ENCODE measurements at regions of chr1 and their contacts with region 1.

Region 1: GRCh38 chr1:39091845-39092645 is 65.9 kb downstream of the NDUFS5 start:
- DNase-seq: peak; percentile 75
- H3K4me3 Mint-ChIP-seq: no peak overlapping the region
- H3K27ac Mint-ChIP-seq: no peak overlapping the region
- H3K4me1 Mint-ChIP-seq: peaks cover 3% of the 10 kb centered on the region
- H3K27me3 Mint-ChIP-seq: no peaks in the 10 kb centered on the region

Region 2: DNA sequence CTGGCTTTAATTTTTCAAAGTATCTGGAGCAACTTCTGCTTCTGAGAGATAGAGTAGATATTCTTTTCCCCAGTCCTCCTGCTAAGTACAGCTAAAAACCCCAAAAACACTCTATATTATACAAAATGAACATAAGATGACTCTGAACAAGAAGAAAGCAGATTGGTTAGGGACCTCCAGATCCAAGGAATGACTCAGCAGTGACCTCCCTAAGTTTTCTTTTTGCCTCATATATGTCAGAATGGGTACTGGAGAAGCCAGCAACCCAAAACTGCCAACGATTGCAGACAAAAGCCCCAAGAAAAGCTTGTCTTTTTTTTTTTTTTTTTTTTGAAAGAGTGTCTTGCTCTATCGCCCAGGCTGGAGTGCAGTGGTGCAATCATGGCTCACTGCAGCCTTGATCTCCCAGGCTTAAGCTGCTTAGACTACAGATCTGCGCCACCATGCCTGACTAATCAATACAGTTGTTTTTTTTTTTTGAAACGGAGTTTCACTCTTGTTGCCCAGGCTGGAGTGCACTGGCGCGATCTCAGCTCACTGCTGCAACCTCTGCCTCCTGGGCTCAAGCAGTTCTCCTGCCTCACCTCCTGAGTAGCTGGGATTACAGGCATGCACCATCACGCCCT is 43.2 kb before region 1 on chr1:
- CTCF ChIA-PET with region 1: no interaction called
- POLR2A ChIA-PET with region 1: no interaction called
- DNase-seq: no peak
- H3K4me3 Mint-ChIP-seq: no peak overlapping the region
- H3K27ac Mint-ChIP-seq: no peak overlapping the region
- H3K4me1 Mint-ChIP-seq: peaks cover 12% of the 10 kb centered on the region
- H3K27me3 Mint-ChIP-seq: no peaks in the 10 kb centered on the region

Region 3: DNA sequence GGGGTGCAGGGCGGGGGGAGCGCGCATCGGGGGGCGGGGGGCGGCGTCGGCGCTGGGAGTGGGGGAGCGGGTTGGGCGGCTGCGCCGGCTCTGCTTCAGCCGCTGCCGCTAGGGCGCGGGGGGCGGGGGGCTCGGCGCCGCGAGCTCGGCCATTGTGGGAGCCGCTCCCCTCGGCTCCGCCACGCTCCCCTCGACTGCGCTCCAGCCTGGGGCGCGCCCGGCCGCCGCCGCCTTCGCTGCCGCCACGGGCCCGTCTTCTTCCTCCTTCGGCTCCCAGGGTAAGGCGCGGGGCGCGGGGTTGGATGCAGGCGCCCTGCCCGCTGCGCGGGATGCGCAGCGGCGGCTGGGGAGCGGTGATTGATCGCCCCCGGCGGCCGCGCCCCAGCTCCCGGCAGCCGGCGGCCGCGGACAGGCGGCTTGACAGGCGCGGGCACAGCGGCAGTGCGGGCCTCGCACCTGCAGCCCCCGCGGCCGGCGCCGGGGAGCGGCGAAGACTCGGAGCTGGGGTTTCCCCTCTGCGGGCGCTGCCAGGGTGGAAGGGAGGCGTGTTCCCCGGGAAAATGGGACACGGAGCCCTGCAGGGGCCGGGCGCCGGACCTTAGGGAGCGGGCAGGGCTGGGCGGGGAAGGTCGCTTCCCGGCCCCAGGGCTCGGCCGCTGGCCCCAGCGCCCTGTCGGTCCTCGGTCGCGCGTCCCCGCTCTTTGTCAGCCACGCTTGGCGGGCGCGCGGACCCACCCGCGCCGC is 10.6 kb before region 1 on chr1:
- CTCF ChIA-PET with region 1: interaction called, 10 read pairs
- POLR2A ChIA-PET with region 1: no interaction called
- DNase-seq: peak; percentile 18
- H3K4me3 Mint-ChIP-seq: no peak overlapping the region
- H3K27ac Mint-ChIP-seq: no peak overlapping the region
- H3K4me1 Mint-ChIP-seq: peaks cover 13% of the 10 kb centered on the region
- H3K27me3 Mint-ChIP-seq: peaks cover 49% of the 10 kb centered on the region

Measured in activated CD4-positive, alpha-beta T cell treated with anti-CD3 and anti-CD28 coated beads, Interleukin-2, amount 10 ng/mL, durations not matched to agents 7 days and 5 days (primary cell).